GM12878 (cell line): ENCODE measurements at regions of chr15 and their contacts with region 1.

Region 1: DNA sequence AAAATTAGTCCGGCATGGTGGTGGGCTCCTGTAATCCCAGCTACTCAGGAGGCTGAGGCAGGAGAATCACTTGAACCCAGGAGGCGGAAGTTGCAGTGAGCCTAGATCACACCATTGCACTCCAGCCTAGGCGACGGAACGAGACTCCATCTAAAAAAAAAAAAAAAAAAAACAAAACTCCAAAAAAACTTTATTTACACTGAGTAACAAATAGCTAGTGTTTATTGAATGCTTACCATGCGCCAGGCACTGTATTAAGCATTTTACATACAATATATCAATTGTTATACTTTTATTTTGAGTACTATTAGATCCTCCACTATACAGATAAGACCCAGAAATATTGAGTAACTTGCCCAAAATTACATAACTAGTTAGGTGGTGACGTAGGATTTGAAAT is 17.4 kb upstream of the ARIH1 start:
- DNase-seq: no peak
- ATAC-seq: no peak
- H3K4me3 ChIP-seq: no peak overlapping the region
- H3K27ac ChIP-seq: no peak overlapping the region
- H3K4me1 ChIP-seq: no peaks in the 10 kb centered on the region
- H3K27me3 ChIP-seq: no peaks in the 10 kb centered on the region
- CTCF ChIP-seq: no peak
- EP300 ChIP-seq: no peak
- POLR2A ChIP-seq: no peak
- RAD21 ChIP-seq: no peak

Region 2: GRCh38 chr15:72404841-72405240 is 51.8 kb before region 1 on chr15:
- CTCF ChIA-PET with region 1: no interaction called
- POLR2A ChIA-PET with region 1: no interaction called
- RAD21 ChIA-PET with region 1: no interaction called
- SMC1A ChIA-PET with region 1: no interaction called
- in situ Hi-C with region 1: no loop called
- intact Hi-C with region 1: loop called (anchors 5 kb)
- DNase-seq: no peak
- ATAC-seq: no peak
- H3K4me3 ChIP-seq: no peak overlapping the region
- H3K27ac ChIP-seq: no peak overlapping the region
- H3K4me1 ChIP-seq: no peaks in the 10 kb centered on the region
- H3K27me3 ChIP-seq: peaks cover 2 to 3% of the 10 kb centered on the region in 2 experiments; a peak in 3 of 4 replicates
- CTCF ChIP-seq: no peak
- EP300 ChIP-seq: no peak
- POLR2A ChIP-seq: no peak
- RAD21 ChIP-seq: no peak